Sigmoid colon (tissue), 7 donors: ENCODE measurements at regions of chr5 and their contacts with region 1.

Region 1: GRCh38 chr5:59506285-59506877 is 387.1 kb downstream of the PDE4D start:
- DNase-seq: no peak
- H3K4me3 ChIP-seq: no peak overlapping the region
- H3K27ac ChIP-seq: no peak overlapping the region
- H3K4me1 ChIP-seq: peaks cover 0 to 30% (median 9%) of the 10 kb centered on the region in 4 donors
- H3K27me3 ChIP-seq: no peaks in the 10 kb centered on the region
- CTCF ChIP-seq: peak in 2 of 4 experiments; percentile 19 to 29
- EP300 ChIP-seq: no peak
- POLR2A ChIP-seq: no peak

Region 2: GRCh38 chr5:59587489-59588337 is 81.3 kb after region 1 on chr5:
- intact Hi-C with region 1: no loop called
- DNase-seq: peak; percentile 65
- H3K4me3 ChIP-seq: peak overlapping the region in 3 of 4 donors; percentile 22 to 26 (median 25)
- H3K27ac ChIP-seq: peak overlapping the region in 1 of 4 donors; percentile 44
- H3K4me1 ChIP-seq: peaks cover 0 to 62% (median 40%) of the 10 kb centered on the region in 4 donors
- H3K27me3 ChIP-seq: no peaks in the 10 kb centered on the region
- CTCF ChIP-seq: no peak
- EP300 ChIP-seq: no peak
- POLR2A ChIP-seq: no peak

Region 3: DNA sequence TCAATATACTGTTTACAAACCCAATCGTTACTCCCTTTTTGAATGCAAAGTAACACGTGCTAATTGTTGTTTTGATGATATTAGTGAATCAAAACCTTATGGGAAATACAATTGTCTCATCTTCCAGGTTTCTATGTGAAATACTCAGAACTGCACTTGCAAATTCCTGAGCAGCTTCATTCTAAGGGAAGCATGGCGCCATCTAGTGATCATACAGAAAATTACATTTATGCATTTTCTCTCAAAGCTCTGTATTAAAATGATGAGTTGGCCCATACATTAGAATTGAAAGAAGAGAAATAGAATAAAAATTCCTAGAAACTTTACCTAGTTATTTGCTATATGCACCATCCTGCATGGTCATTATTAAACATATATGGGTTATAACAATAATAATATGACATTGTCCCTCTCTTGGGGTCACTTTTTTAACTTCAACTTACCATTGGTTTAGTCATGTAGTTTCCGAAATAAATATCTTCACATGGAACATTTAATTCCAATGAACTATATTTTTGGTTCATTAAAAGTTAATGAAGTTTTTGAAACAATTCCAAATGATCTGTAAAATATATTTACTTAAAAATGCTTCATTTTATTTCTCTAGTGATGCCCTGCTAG is 167.2 kb after region 1 on chr5:
- intact Hi-C with region 1: loop called (anchors 5 kb)
- DNase-seq: no peak
- H3K4me3 ChIP-seq: no peak overlapping the region
- H3K27ac ChIP-seq: no peak overlapping the region
- H3K4me1 ChIP-seq: peaks cover 0 to 26% (median 11%) of the 10 kb centered on the region in 4 donors
- H3K27me3 ChIP-seq: no peaks in the 10 kb centered on the region
- CTCF ChIP-seq: peak; percentile 56 to 81 (median 74)
- EP300 ChIP-seq: no peak
- POLR2A ChIP-seq: no peak

Region 4: GRCh38 chr5:59799668-59800346 is 293.4 kb after region 1 on chr5:
- intact Hi-C with region 1: loop called (anchors 5 kb)
- DNase-seq: no peak
- H3K4me3 ChIP-seq: peak overlapping the region in 1 of 4 donors; percentile 22
- H3K27ac ChIP-seq: peak overlapping the region in 3 of 4 donors; percentile 59 to 74 (median 64)
- H3K4me1 ChIP-seq: peaks cover 0 to 28% (median 27%) of the 10 kb centered on the region in 4 donors
- H3K27me3 ChIP-seq: no peaks in the 10 kb centered on the region
- CTCF ChIP-seq: peak; percentile 67 to 83 (median 74)
- EP300 ChIP-seq: no peak
- POLR2A ChIP-seq: no peak